CD4-positive, alpha-beta memory T cell (primary cell): ENCODE measurements at regions of chr22 and their contacts with region 1.

Region 1: DNA sequence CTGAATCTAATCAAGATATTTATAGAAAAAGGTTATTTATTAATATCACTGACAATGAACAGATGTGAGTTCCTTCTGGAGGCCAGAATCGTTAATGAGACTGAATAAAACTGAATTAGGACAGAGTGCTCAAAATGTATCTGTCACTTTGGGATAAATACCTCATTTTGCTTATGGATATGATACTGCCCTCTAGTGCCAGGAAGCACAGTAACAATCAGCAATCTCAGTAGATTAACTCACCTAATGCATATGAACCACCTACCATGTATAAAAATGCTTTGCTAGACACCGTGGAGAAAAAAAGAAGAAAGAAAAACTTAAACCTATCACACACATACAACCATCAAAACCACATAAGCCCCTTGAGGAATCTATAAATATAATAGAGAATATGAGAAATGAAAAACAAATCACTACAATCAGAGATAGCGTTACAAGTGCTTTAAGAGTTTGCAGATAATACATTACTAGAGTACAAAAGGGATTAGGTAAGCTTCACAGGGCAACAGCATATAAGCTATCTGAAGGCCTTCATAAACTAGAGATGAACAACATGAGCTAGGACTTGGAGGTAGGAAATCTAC is 117.4 kb downstream of the SGSM3 start:
- DNase-seq: peak in 4 of 5 donors; percentile 33 to 45 (median 42)
- H3K4me3 ChIP-seq: no peak overlapping the region
- H3K4me3 Mint-ChIP-seq: no peak overlapping the region
- H3K27ac ChIP-seq: no peak overlapping the region
- H3K27ac Mint-ChIP-seq: peak overlapping the region in 2 of 7 donors; percentile 7 to 48
- H3K4me1 ChIP-seq: peaks cover 30% of the 10 kb centered on the region
- H3K4me1 Mint-ChIP-seq: peaks cover 26 to 34% (median 33%) of the 10 kb centered on the region in 4 donors
- H3K27me3 ChIP-seq: no peaks in the 10 kb centered on the region
- H3K27me3 Mint-ChIP-seq: no peaks in the 10 kb centered on the region

Region 2: GRCh38 chr22:40463017-40463631 is 24.6 kb before region 1 on chr22:
- CTCF ChIA-PET with region 1: interaction called, 27 read pairs
- POLR2A ChIA-PET with region 1: interaction called, 4 read pairs
- intact Hi-C with region 1: no loop called
- DNase-seq: peak; percentile 36 to 58 (median 47)
- H3K4me3 ChIP-seq: peak overlapping the region; percentile 59 to 75
- H3K4me3 Mint-ChIP-seq: peak overlapping the region; percentile 78 to 99 (median 98)
- H3K27ac ChIP-seq: peak overlapping the region; percentile 64
- H3K27ac Mint-ChIP-seq: peak overlapping the region; percentile 89 to 95 (median 93)
- H3K4me1 ChIP-seq: peaks cover 57% of the 10 kb centered on the region
- H3K4me1 Mint-ChIP-seq: peaks cover 48 to 70% (median 61%) of the 10 kb centered on the region in 4 donors
- H3K27me3 ChIP-seq: no peaks in the 10 kb centered on the region
- H3K27me3 Mint-ChIP-seq: no peaks in the 10 kb centered on the region

Region 3: GRCh38 chr22:40473703-40474102 is 14.1 kb before region 1 on chr22:
- CTCF ChIA-PET with region 1: interaction called, 19 read pairs
- POLR2A ChIA-PET with region 1: no interaction called
- intact Hi-C with region 1: no loop called
- DNase-seq: no peak
- H3K4me3 ChIP-seq: no peak overlapping the region
- H3K4me3 Mint-ChIP-seq: no peak overlapping the region
- H3K27ac ChIP-seq: no peak overlapping the region
- H3K27ac Mint-ChIP-seq: no peak overlapping the region
- H3K4me1 ChIP-seq: peaks cover 11% of the 10 kb centered on the region
- H3K4me1 Mint-ChIP-seq: peaks cover 7 to 29% (median 10%) of the 10 kb centered on the region in 4 donors
- H3K27me3 ChIP-seq: no peaks in the 10 kb centered on the region
- H3K27me3 Mint-ChIP-seq: no peaks in the 10 kb centered on the region

Region 4: GRCh38 chr22:40504285-40505249 is 16.8 kb after region 1 on chr22:
- CTCF ChIA-PET with region 1: interaction called, 12 read pairs
- POLR2A ChIA-PET with region 1: no interaction called
- intact Hi-C with region 1: no loop called
- DNase-seq: no peak
- H3K4me3 ChIP-seq: no peak overlapping the region
- H3K4me3 Mint-ChIP-seq: no peak overlapping the region
- H3K27ac ChIP-seq: no peak overlapping the region
- H3K27ac Mint-ChIP-seq: peak overlapping the region in 4 of 7 donors; percentile 15 to 66 (median 41)
- H3K4me1 ChIP-seq: peaks cover 2% of the 10 kb centered on the region
- H3K4me1 Mint-ChIP-seq: peaks cover 8 to 15% (median 10%) of the 10 kb centered on the region in 4 donors
- H3K27me3 ChIP-seq: no peaks in the 10 kb centered on the region
- H3K27me3 Mint-ChIP-seq: no peaks in the 10 kb centered on the region